CD4-positive, alpha-beta T cell (primary cell): ENCODE measurements at regions of chr13 and their contacts with region 1.

Region 1: DNA sequence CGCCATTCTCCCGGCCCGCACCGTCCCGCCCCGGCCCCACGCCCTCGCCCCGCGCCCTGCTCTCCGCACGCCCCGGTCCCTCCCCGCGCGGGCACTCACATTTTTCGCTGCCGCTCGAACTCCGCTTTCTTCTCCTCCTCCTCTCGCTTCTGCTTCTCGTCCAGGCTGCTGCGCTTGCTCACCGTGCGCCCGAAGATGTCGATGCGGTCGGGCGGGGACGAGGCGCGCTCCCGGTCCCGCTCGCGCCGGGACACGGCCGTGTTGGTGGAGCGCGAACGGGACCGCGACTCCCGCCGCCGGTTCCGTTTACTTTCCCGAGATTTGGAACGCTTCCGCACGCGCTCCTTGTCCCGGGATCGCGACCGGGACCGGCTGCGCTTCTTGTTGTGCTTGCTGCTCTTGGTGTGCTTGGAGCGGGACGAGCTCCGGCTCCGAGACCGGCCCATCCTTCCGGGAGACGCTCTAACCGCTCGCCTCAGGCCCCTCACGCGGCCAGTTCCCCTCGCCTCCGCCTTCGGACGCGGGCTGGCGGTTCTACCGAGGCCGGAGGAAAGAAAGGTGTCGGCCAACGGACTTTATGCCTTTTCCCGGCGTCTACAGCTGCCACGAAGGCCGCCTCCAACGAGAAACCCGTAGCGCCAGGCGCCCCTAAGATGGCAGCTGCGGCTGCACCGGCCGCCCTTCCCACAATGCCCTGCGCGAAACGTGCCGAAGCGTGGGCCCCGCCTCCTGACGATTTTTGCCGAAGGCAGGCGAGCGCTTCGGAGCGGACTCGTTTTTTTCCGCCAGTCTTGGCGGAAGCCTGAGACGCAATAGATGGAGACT is at the start of gene ARGLU1:
- DNase-seq: peak; percentile 90 to 98 (median 96)
- ATAC-seq: peak; percentile 85
- H3K4me3 ChIP-seq: peak within 1 kb of the TSS; percentile 91
- H3K4me3 Mint-ChIP-seq: peak within 1 kb of the TSS; percentile 94
- H3K27ac ChIP-seq: peak within 1 kb of the TSS; percentile 95 to 97
- H3K27ac Mint-ChIP-seq: peak within 1 kb of the TSS; percentile 92
- H3K4me1 ChIP-seq: peaks cover 29% of the 10 kb centered on the region
- H3K4me1 Mint-ChIP-seq: peaks cover 61% of the 10 kb centered on the region
- H3K27me3 ChIP-seq: no peaks in the 10 kb centered on the region
- H3K27me3 Mint-ChIP-seq: no peaks in the 10 kb centered on the region
- CTCF ChIP-seq: no peak
- total RNA-seq, gene ARGLU1: 146 to 152 TPM

Region 2: GRCh38 chr13:106536244-106537034 is 31.2 kb before region 1 on chr13:
- CTCF ChIA-PET with region 1: interaction called, 16 read pairs
- POLR2A ChIA-PET with region 1: interaction called, 35 read pairs
- intact Hi-C with region 1: loop called (anchors 1 to 2 kb)
- DNase-seq: peak; percentile 74 to 95 (median 87)
- ATAC-seq: peak; percentile 46
- H3K4me3 ChIP-seq: peak overlapping the region; percentile 91
- H3K4me3 Mint-ChIP-seq: peak overlapping the region; percentile 97
- H3K27ac ChIP-seq: no peak overlapping the region
- H3K27ac Mint-ChIP-seq: peak overlapping the region; percentile 40
- H3K4me1 ChIP-seq: peaks cover 33% of the 10 kb centered on the region
- H3K4me1 Mint-ChIP-seq: peaks cover 29% of the 10 kb centered on the region
- H3K27me3 ChIP-seq: peaks cover 22 to 32% of the 10 kb centered on the region in 2 experiments
- H3K27me3 Mint-ChIP-seq: peaks cover 36% of the 10 kb centered on the region
- CTCF ChIP-seq: peak; percentile 98

Region 3: GRCh38 chr13:106917673-106918556 is 350.2 kb after region 1 on chr13:
- CTCF ChIA-PET with region 1: no interaction called
- POLR2A ChIA-PET with region 1: no interaction called
- intact Hi-C with region 1: loop called in 1 of 2 experiments (anchors 10 kb)
- DNase-seq: peak; percentile 23 to 79 (median 53)
- ATAC-seq: peak; percentile 78
- H3K4me3 ChIP-seq: peak overlapping the region; percentile 66
- H3K4me3 Mint-ChIP-seq: peak overlapping the region; percentile 79
- H3K27ac ChIP-seq: no peak overlapping the region
- H3K27ac Mint-ChIP-seq: no peak overlapping the region
- H3K4me1 ChIP-seq: peaks cover 7% of the 10 kb centered on the region
- H3K4me1 Mint-ChIP-seq: peaks cover 6% of the 10 kb centered on the region
- H3K27me3 ChIP-seq: peaks cover 8 to 14% of the 10 kb centered on the region in 2 experiments
- H3K27me3 Mint-ChIP-seq: peaks cover 47% of the 10 kb centered on the region
- CTCF ChIP-seq: peak; percentile 75

Region 4: DNA sequence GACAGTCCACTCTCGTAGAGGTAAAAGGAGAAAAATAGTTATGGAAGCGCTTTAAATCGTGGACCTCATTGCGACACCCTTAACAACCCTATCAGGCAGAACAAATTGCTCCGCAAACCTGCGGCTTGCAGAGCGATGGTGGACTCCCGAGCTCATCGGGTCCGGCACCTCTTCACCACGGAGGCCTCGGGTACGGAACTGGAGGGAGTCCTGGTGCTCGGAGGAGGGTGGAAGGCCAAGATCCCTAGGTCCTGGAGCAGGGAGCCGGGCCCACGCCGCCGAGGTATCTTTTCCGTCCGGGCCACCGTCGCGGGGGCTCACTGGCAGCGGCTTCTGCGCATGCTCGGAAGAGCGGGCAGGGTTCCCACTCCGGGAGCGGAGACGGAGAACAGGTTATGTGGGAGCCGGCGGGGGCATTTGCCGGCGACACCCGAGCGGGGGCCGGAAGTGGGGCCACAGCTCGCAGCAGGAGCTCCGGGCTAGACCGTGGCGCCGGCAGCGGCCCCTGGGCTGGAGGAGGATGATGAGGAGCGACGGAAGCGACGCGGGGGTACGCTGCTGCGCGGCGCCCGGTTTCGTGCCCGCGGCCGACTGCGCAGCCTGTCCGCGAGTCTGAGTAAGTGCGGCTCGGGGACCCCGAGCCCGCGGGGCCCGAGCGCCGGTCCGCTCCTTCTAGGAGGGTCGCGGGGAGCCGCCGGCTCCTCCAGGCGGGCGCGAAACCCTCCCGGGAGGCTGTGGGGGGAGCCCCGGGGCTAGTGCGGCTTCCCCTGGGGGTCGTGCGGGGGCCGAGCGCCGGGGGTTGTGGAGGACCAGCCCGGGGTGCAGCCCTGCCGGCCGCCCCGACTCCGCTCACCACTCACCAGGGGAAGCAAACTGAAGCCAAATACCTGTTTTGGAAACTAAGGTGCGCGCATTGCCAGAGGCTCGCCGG is 1650.6 kb after region 1 on chr13 and contains the start of gene ABHD13:
- CTCF ChIA-PET with region 1: no interaction called
- POLR2A ChIA-PET with region 1: no interaction called
- intact Hi-C with region 1: loop called in 1 of 2 experiments (anchors 5 kb)
- DNase-seq: peak; percentile 78 to 96 (median 88)
- ATAC-seq: peak; percentile 67
- H3K4me3 ChIP-seq: peak within 1 kb of the TSS; percentile 89
- H3K4me3 Mint-ChIP-seq: peak within 1 kb of the TSS; percentile 99
- H3K27ac ChIP-seq: peak within 1 kb of the TSS; percentile 53 to 70
- H3K27ac Mint-ChIP-seq: peak within 1 kb of the TSS; percentile 96
- H3K4me1 ChIP-seq: peaks cover 33% of the 10 kb centered on the region
- H3K4me1 Mint-ChIP-seq: peaks cover 71% of the 10 kb centered on the region
- H3K27me3 ChIP-seq: no peaks in the 10 kb centered on the region
- H3K27me3 Mint-ChIP-seq: no peaks in the 10 kb centered on the region
- CTCF ChIP-seq: no peak
- total RNA-seq, gene ABHD13: 18.0 to 18.6 TPM